Activated CD4-positive, alpha-beta memory T cell treated with anti-CD3 and anti-CD28 coated beads for 36 hours (primary cell): ENCODE measurements at regions of chr9 and their contacts with region 1.

Region 1: DNA sequence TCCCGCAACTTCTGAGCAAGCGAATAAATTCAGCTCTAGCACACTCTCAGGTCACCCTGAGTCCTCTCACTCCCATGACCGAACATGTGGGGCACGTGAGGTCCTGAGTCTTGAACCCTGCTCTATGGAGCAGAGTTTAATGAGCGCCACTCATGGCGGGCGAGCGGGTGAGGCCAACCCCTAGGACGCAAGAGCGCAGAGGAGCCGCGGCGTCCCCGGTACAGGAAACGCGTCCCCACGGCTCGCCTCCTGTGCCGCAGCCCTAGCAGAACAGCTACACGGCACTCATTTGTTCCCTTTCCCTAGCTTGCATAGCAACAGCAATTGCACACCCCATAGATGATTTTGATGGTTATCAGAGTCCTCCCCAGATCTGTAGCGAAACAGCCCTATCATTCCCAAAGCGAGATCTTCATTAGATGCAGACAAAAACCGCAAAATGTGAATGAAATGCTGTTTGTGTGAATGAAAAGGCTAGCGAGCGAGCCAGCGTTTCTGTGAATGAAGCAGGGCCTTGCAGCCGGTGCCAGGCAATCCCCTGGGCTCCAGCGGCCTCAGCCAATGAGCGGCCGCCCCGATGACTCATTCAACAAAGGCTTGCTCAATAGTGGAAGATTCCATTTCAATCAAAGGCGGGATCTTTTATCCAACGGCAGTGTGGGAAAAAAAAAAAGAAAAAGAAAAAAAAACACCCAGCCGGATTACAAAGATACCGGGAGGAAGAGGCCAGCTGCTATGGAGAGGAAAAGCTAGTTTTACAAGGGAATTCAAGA is 1.5 kb upstream of the SHC3 start:
- DNase-seq: peak; percentile 77
- H3K4me3 Mint-ChIP-seq: peak overlapping the region; percentile 6
- H3K27ac Mint-ChIP-seq: no peak overlapping the region
- H3K4me1 Mint-ChIP-seq: peaks cover 16% of the 10 kb centered on the region
- H3K27me3 Mint-ChIP-seq: peaks cover 57% of the 10 kb centered on the region

Region 2: DNA sequence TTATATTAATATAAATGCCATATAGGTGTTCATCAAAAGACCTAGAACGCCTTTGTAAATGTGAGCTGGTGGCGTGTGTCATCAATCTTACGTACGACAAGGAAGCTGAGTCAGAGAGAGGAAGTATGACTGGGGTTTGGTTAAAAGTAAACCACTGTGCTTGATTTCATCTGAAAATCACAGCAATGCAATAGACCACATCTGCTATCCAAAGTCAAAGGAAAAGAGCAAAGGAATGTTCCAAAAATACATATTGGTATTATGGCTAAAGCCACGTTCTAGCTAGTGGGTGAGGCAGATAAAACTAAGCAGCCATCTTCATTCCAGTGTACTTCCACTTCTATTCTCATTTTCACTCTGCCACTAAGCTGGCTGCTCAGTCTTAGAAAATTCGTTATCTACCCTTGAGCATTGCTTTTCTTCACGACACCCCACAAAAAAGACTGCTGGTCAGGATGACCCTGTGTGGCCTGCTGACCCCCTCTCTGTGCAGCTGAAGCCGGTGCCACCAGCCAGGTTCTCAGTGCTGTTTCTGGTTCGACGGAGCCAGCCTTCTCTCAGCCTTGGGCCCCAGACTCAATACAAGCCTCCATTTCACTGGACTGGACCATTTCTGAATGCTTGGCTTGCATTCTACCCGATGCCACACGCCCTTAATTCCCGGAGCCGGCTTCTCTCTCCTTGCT is 25.3 kb before region 1 on chr9:
- CTCF ChIA-PET with region 1: no interaction called
- POLR2A ChIA-PET with region 1: no interaction called
- intact Hi-C with region 1: loop called (anchors 2 kb)
- DNase-seq: peak; percentile 37
- H3K4me3 Mint-ChIP-seq: no peak overlapping the region
- H3K27ac Mint-ChIP-seq: no peak overlapping the region
- H3K4me1 Mint-ChIP-seq: peaks cover 20% of the 10 kb centered on the region
- H3K27me3 Mint-ChIP-seq: peaks cover 30% of the 10 kb centered on the region

Region 3: DNA sequence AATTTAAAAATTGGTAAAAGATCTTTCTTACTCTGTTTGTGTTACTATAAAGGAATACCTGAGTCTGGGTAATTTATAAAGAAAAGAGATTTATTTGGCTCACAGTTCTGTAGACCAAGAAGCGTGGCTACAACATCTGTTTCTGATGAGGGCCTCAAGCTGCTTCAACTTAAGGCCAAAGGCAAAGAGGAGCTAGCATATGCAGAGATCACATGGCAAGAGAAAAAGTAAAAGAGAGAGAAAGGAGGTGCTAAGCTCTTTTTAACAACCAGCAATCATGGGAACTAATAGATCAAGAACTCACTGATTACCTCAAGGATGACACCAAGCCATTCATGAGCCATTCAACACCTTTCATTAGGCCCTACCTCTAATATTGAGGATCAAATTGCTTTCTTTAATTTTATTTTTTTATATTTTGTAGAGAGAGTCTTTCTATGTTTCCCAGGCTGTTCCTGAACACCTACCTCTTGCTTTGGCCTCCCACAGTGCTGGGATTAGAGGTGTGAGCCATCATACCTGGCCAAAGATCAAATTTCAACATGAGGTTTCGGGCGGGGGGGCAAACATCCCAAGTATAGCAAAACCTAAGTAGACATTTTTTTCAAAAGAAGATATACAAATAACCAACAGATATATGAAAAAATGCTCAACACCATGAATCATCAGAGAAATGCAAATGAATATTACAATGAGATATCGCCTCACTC is 14.5 kb after region 1 on chr9:
- CTCF ChIA-PET with region 1: no interaction called
- POLR2A ChIA-PET with region 1: no interaction called
- intact Hi-C with region 1: no loop called
- DNase-seq: no peak
- H3K4me3 Mint-ChIP-seq: no peak overlapping the region
- H3K27ac Mint-ChIP-seq: no peak overlapping the region
- H3K4me1 Mint-ChIP-seq: no peaks in the 10 kb centered on the region
- H3K27me3 Mint-ChIP-seq: peaks cover 10% of the 10 kb centered on the region